Aorta (tissue), 5 donors: ENCODE measurements at regions of chr11 and their contacts with region 1.

Region 1: DNA sequence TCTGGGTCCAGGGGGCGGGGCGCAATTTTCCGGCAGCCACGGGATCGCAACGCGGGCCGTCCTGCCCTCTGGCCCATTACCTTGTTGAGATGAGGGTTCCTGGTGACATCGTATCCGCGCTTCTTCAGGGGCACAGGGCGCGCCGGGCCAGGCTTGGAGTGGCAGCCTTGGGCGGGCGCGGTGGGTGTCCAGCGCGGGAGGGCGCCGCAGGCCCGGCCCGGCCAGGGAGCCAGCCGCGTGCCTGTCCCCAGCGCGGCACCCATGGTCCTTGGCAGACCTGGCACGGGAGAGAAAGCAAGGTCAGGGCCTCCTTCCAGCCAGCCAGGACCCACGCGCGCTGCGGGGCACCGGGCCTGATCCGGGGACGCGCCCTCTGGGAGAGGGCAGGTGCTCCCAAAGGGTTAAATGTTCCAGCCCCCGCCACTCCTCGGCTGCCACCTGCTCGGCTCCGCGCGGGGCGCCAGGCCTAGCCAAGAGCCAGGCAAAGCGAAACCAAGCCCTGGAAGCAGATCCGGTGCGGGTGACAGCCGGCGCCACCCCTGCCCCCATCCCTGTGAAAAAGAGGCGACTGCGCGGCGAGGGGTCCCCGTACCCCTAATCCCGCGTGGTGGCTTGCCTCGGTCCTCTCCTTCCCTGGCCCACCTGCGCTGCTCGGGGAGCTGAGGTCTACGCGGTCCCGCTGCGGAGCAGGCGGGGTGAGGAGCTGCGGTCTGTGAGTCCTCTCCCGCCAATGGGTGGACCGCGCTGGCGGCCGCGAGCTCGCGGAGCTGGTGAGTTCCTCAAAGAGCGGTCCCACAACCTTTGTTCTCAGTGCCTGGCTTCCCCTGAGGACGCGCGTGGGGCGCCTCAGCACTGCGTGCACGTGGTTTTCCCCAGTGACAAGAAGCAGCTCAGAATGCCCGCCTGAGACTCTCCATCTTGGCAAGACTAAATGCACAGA is at the start of gene ME3:
- DNase-seq: peak; percentile 85 to 93
- ATAC-seq: peak; percentile 86
- H3K4me3 ChIP-seq: peak within 1 kb of the TSS; percentile 56 to 57
- H3K27ac ChIP-seq: peak within 1 kb of the TSS; percentile 50 to 92
- H3K4me1 ChIP-seq: peaks cover 0 to 3% of the 10 kb centered on the region in 2 donors
- H3K27me3 ChIP-seq: no peaks in the 10 kb centered on the region
- total RNA-seq, gene ME3: 27.7 to 29.4 TPM

Region 2: GRCh38 chr11:86302100-86302793 is 369.7 kb before region 1 on chr11 and contains the start of gene HIKESHI:
- intact Hi-C with region 1: no loop called
- DNase-seq: peak; percentile 100
- ATAC-seq: peak; percentile 97
- H3K4me3 ChIP-seq: peak within 1 kb of the TSS; percentile 55 to 93
- H3K27ac ChIP-seq: peak within 1 kb of the TSS; percentile 16 to 68
- H3K4me1 ChIP-seq: no peaks in the 10 kb centered on the region
- H3K27me3 ChIP-seq: no peaks in the 10 kb centered on the region
- total RNA-seq, gene HIKESHI: 29.4 to 32.6 TPM

Region 3: DNA sequence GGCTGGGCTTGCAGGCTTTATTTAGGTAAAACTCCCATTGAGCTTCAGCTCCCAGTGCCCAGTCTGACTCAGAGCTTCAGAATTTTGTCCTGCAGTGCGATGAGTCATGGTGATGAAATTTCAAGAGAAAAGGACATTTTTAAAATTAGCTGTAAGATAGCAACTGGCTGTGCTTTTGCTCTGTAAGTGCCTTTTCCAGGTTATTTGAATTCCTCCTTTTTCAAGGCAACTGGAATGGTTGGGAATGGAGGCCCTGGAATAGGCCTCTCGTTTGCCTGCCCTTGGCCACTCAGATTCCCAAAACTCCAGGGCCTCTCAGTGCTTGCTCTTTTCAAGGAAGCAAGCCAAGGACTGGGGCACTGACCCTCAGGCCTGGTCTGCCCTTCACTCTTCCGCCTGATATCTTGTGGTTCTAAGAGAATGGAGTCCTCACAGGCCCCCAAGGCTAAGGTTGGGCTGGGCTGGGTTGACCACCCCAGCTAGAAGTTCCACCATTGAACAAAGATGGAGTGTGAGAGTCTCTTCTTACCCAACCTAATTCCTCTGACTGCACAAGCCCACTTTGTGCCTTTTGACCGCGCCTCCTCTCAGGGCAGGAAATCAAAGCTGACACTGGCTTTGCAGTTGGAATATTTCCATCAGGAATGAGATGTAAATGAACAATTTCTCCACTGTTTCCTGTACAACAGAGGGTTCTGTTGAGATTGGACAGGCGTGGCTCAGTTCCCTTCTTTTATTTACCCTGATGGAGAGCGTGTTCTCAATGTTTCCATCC is 68.9 kb after region 1 on chr11:
- intact Hi-C with region 1: no loop called
- DNase-seq: peak in 1 of 2 donors; percentile 77
- ATAC-seq: peak; percentile 71
- H3K4me3 ChIP-seq: no peak overlapping the region
- H3K27ac ChIP-seq: peak overlapping the region; percentile 87 to 98
- H3K4me1 ChIP-seq: peaks cover 3 to 21% of the 10 kb centered on the region in 2 donors
- H3K27me3 ChIP-seq: no peaks in the 10 kb centered on the region

Region 4: DNA sequence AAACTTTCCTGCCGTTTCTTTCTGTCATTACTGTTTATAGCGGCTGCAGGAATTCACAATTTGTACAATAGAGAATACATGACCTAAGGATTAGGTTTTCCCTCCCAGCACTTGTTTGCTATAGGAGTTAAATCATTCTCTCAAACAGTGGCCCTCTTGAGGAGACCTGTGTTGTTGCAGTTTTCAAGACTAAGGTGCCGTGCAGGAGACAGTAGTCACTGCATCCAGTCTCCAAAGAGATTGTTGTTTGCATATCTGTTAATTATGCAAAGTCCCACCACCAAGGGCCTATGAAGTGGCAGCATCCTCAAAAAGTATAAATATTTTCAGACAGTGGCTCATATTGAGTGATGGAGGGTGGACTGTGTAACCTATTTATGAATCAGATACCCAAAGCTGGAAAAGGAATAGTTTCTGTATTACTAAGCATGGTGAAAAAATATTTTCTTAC is 130.7 kb after region 1 on chr11:
- intact Hi-C with region 1: loop called (anchors 5 kb)
- DNase-seq: no peak
- ATAC-seq: no peak
- H3K4me3 ChIP-seq: peak overlapping the region in 1 of 2 donors; percentile 75
- H3K27ac ChIP-seq: peak overlapping the region in 1 of 2 donors; percentile 17
- H3K4me1 ChIP-seq: peaks cover 0 to 4% of the 10 kb centered on the region in 2 donors
- H3K27me3 ChIP-seq: no peaks in the 10 kb centered on the region